ENCODE measurements at regions of chr11 and their contacts with region 1.

Region 1: DNA sequence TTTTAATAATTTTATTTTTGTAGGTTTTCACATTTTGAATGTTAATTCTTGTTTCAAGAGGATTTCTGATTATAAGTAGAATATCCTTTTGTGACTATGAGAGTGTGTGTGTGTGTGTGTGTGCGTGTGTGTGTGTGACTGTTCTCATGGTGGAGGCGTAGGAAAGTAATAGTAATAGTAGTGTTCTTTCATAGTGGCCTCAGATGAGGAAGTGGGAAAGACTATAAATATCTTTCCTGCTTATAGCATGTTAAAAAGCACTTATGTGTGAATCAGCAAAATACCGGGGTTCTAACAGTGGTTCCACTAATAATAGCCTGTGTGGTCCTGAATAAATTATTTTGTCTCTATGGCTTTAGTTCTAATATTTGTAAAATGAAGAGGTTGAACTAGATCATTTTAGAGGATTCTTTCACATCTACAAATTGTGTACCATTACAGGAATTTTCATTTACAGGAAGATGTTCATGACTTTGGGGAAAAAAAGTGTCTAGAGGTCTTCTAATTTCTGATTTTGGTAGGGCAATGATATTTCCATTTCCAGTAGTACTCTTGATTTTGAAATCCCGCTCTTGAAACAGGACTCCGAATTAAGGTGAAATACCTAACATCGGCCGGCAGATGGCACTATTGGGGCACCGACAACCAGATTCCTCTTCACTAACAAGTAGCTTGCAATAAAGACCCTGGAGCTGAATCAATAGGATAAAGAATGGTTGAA is 29.9 kb upstream of the OR10G7 start:
- DNase-seq: peak; percentile 84
- ATAC-seq: peak; percentile 52
- H3K4me3 Mint-ChIP-seq: no peak overlapping the region
- H3K27ac Mint-ChIP-seq: no peak overlapping the region
- H3K4me1 Mint-ChIP-seq: peaks cover 22% of the 10 kb centered on the region
- H3K27me3 Mint-ChIP-seq: peaks cover 29% of the 10 kb centered on the region

Region 2: GRCh38 chr11:123760894-123761293 is 310.2 kb before region 1 on chr11:
- CTCF ChIA-PET with region 1: no interaction called
- POLR2A ChIA-PET with region 1: no interaction called
- intact Hi-C with region 1: no loop called
- DNase-seq: no peak
- ATAC-seq: peak; percentile 23
- H3K4me3 Mint-ChIP-seq: no peak overlapping the region
- H3K27ac Mint-ChIP-seq: no peak overlapping the region
- H3K4me1 Mint-ChIP-seq: no peaks in the 10 kb centered on the region
- H3K27me3 Mint-ChIP-seq: peaks cover 11% of the 10 kb centered on the region

Region 3: GRCh38 chr11:124114942-124115781 is 44.1 kb after region 1 on chr11 and contains the start of gene VWA5A:
- CTCF ChIA-PET with region 1: interaction called, 10 read pairs
- POLR2A ChIA-PET with region 1: no interaction called
- intact Hi-C with region 1: loop called (anchors 1 kb)
- DNase-seq: peak; percentile 90
- ATAC-seq: peak; percentile 99
- H3K4me3 Mint-ChIP-seq: peak within 1 kb of the TSS; percentile 78
- H3K27ac Mint-ChIP-seq: peak within 1 kb of the TSS; percentile 87
- H3K4me1 Mint-ChIP-seq: peaks cover 23% of the 10 kb centered on the region
- H3K27me3 Mint-ChIP-seq: peaks cover 6% of the 10 kb centered on the region
- total RNA-seq, gene VWA5A: 8.6 to 8.8 TPM

Region 4: GRCh38 chr11:124153821-124154220 is 82.7 kb after region 1 on chr11:
- CTCF ChIA-PET with region 1: no interaction called
- POLR2A ChIA-PET with region 1: no interaction called
- intact Hi-C with region 1: no loop called
- DNase-seq: no peak
- ATAC-seq: no peak
- H3K4me3 Mint-ChIP-seq: no peak overlapping the region
- H3K27ac Mint-ChIP-seq: no peak overlapping the region
- H3K4me1 Mint-ChIP-seq: no peaks in the 10 kb centered on the region
- H3K27me3 Mint-ChIP-seq: peaks cover 13% of the 10 kb centered on the region

Region 5: GRCh38 chr11:124194698-124195410 is 123.8 kb after region 1 on chr11:
- CTCF ChIA-PET with region 1: interaction called, 91 read pairs
- POLR2A ChIA-PET with region 1: no interaction called
- intact Hi-C with region 1: loop called (anchors 1 kb)
- DNase-seq: peak; percentile 71
- ATAC-seq: peak; percentile 90
- H3K4me3 Mint-ChIP-seq: no peak overlapping the region
- H3K27ac Mint-ChIP-seq: no peak overlapping the region
- H3K4me1 Mint-ChIP-seq: no peaks in the 10 kb centered on the region
- H3K27me3 Mint-ChIP-seq: peaks cover 17% of the 10 kb centered on the region

Region 6: DNA sequence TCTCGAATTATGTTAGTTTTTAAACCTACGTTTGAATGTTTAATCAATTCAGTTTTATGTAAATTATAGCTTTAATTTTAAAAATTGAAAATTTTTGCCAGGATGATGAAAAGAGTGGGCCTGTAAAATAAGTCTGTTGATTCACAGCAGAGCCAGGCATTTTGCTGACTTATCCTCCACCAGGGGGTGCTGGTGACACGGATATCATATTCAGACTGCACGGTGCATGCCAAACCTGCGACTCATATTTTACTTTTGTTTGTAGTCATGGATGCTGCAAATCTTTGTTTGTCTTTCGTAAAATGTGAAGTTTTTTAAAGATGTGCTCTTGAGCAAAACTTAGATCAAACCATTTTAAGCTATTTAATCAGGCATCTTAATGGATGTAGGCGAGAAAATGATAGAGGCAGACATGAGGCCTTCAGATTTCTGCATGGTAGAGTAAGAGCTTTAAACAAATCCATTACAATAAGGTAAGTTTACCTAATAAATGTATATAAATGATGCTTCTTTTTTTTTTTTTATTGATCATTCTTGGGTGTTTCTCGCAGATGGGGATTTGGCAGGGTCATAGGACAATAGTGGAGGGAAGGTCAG is 331.3 kb after region 1 on chr11:
- CTCF ChIA-PET with region 1: no interaction called
- POLR2A ChIA-PET with region 1: no interaction called
- intact Hi-C with region 1: loop called in 1 of 2 experiments (anchors 5 kb)
- DNase-seq: peak; percentile 82
- ATAC-seq: peak; percentile 93
- H3K4me3 Mint-ChIP-seq: no peak overlapping the region
- H3K27ac Mint-ChIP-seq: no peak overlapping the region
- H3K4me1 Mint-ChIP-seq: peaks cover 2% of the 10 kb centered on the region
- H3K27me3 Mint-ChIP-seq: peaks cover 4% of the 10 kb centered on the region

Region 7: GRCh38 chr11:124586238-124586860 is 515.3 kb after region 1 on chr11:
- CTCF ChIA-PET with region 1: no interaction called
- POLR2A ChIA-PET with region 1: no interaction called
- intact Hi-C with region 1: loop called (anchors 1 to 5 kb)
- DNase-seq: peak; percentile 71
- ATAC-seq: no peak
- H3K4me3 Mint-ChIP-seq: no peak overlapping the region
- H3K27ac Mint-ChIP-seq: no peak overlapping the region
- H3K4me1 Mint-ChIP-seq: no peaks in the 10 kb centered on the region
- H3K27me3 Mint-ChIP-seq: peaks cover 11% of the 10 kb centered on the region

Measured in activated CD4-positive, alpha-beta T cell treated with anti-CD3 and anti-CD28 coated beads for 36 hours (primary cell).